HCT116 (cell line): ENCODE measurements at regions of chr15 and their contacts with region 1.

Region 1: DNA sequence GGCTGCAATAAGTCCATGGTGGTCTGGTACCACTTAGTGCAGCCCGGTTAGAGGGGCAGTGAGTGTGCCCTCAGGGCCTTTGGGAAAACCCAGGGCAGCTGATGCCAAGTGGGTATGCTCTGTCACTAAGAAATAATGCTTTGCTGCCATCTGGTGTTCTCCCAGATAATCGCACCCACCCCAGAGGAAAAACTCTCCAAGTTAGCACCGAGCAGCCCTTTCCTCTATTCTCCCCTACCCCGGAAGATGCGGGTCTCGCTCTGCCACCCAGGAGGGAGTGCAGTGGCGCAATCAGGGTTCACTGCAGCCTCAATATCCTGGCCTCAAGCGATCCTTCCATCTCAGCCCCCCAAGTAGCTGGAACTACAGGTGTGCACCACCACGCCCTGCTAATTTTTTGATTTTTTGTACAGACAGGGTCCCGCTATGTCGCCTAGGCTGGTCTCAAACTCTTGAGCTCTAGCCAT is 21.3 kb upstream of the DAPK2 start:
- DNase-seq: no peak
- ATAC-seq: peak; percentile 87
- H3K4me3 ChIP-seq: no peak overlapping the region
- H3K27ac ChIP-seq: no peak overlapping the region
- H3K4me1 ChIP-seq: peaks cover 0 to 18% of the 10 kb centered on the region in 2 experiments; a peak in 1 of 4 replicates
- H3K27me3 ChIP-seq: no peaks in the 10 kb centered on the region
- CTCF ChIP-seq: peak; percentile 67 to 81 (median 73)
- POLR2A ChIP-seq: no peak
- RAD21 ChIP-seq: peak; percentile 90

Region 2: GRCh38 chr15:63288778-63289378 is 778.7 kb before region 1 on chr15:
- CTCF ChIA-PET with region 1: no interaction called
- POLR2A ChIA-PET with region 1: no interaction called
- RAD21 ChIA-PET with region 1: no interaction called
- intact Hi-C with region 1: loop called (anchors 2 kb)
- DNase-seq: peak; percentile 33
- ATAC-seq: peak; percentile 60; the same call in 1 of the 2 replicates
- H3K4me3 ChIP-seq: no peak overlapping the region
- H3K27ac ChIP-seq: no peak overlapping the region
- H3K4me1 ChIP-seq: peaks cover 0 to 7% of the 10 kb centered on the region in 2 experiments; a peak in 2 of 4 replicates
- H3K27me3 ChIP-seq: no peaks in the 10 kb centered on the region
- CTCF ChIP-seq: peak; percentile 51 to 79 (median 73)
- POLR2A ChIP-seq: no peak
- RAD21 ChIP-seq: peak; percentile 85

Region 3: DNA sequence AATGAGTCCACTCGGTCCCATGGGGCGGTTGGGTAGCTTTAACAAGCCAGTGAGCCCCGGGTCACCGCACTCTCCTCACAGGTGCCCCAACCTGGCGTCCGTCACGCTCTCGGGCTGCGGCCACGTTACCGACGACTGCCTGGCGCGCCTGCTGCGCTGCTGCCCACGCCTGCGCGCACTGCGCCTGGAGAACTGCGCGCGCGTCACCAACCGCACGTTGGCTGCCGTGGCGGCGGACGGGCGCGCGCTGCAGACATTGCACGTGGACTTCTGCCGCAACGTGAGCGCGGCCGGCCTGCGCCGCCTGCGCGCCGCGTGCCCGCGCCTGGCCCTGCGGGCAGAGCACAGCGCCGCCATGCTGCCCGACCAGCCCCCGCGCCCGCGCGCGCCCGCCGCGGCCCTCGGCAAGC is 467.0 kb before region 1 on chr15:
- CTCF ChIA-PET with region 1: interaction called, 11 read pairs
- POLR2A ChIA-PET with region 1: no interaction called
- RAD21 ChIA-PET with region 1: no interaction called
- intact Hi-C with region 1: no loop called
- DNase-seq: peak; percentile 79
- ATAC-seq: peak; percentile 82
- H3K4me3 ChIP-seq: peak overlapping the region; percentile 77 to 85
- H3K27ac ChIP-seq: peak overlapping the region; percentile 74
- H3K4me1 ChIP-seq: peaks cover 13 to 31% of the 10 kb centered on the region in 2 experiments; a peak in 3 of 4 replicates
- H3K27me3 ChIP-seq: no peaks in the 10 kb centered on the region
- CTCF ChIP-seq: no peak
- POLR2A ChIP-seq: peak; percentile 83
- RAD21 ChIP-seq: no peak

Region 4: GRCh38 chr15:63752075-63752684 is 315.4 kb before region 1 on chr15:
- CTCF ChIA-PET with region 1: interaction called, 69 read pairs
- POLR2A ChIA-PET with region 1: no interaction called
- RAD21 ChIA-PET with region 1: interaction called in 1 of 2 experiments, 14 read pairs
- intact Hi-C with region 1: loop called (anchors 1 kb)
- DNase-seq: peak; percentile 60
- ATAC-seq: peak; percentile 93
- H3K4me3 ChIP-seq: no peak overlapping the region
- H3K27ac ChIP-seq: no peak overlapping the region
- H3K4me1 ChIP-seq: no peaks in the 10 kb centered on the region
- H3K27me3 ChIP-seq: no peaks in the 10 kb centered on the region
- CTCF ChIP-seq: peak; percentile 66 to 82 (median 72)
- POLR2A ChIP-seq: no peak
- RAD21 ChIP-seq: peak; percentile 87

Region 5: DNA sequence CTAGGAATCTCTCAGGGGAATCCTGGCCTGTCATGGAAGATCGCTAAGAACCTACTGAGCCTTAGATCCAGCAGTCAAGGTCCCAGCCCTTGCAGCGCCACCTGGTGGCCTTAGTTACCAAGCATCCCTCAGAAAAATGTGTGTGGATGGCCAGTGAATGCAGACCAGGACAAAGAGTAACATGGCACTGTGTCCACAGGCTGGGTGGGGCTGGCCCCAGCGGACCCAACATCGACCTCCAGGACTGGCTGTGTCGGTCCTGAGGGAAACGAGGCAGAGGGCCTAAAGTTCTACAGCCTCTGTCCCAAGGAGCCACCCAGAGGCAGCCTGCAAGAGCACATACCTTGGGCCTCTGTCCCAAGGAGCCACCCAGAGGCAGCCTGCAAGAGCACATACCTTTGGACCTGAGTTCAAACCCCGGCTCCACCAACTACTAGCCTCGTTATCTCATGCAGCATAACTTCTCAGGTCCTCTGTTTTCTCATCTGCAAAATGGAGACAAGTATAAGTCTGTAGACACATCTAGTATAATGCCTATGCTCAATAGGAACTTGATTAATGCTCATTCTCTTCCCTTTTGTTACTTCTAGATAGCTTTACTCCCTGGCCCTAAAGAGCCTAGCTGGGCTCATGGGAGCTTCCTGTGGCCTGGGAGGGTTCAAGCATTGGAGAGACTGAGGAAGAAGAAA is 176.4 kb before region 1 on chr15:
- CTCF ChIA-PET with region 1: no interaction called
- POLR2A ChIA-PET with region 1: no interaction called
- RAD21 ChIA-PET with region 1: no interaction called
- intact Hi-C with region 1: loop called (anchors 1 kb)
- DNase-seq: peak; percentile 81
- ATAC-seq: peak; percentile 96
- H3K4me3 ChIP-seq: no peak overlapping the region
- H3K27ac ChIP-seq: no peak overlapping the region
- H3K4me1 ChIP-seq: peaks cover under 1 to 19% of the 10 kb centered on the region in 2 experiments; a peak in 3 of 4 replicates
- H3K27me3 ChIP-seq: no peaks in the 10 kb centered on the region
- CTCF ChIP-seq: peak; percentile 87 to 95 (median 92)
- POLR2A ChIP-seq: no peak
- RAD21 ChIP-seq: peak; percentile 78

Region 6: DNA sequence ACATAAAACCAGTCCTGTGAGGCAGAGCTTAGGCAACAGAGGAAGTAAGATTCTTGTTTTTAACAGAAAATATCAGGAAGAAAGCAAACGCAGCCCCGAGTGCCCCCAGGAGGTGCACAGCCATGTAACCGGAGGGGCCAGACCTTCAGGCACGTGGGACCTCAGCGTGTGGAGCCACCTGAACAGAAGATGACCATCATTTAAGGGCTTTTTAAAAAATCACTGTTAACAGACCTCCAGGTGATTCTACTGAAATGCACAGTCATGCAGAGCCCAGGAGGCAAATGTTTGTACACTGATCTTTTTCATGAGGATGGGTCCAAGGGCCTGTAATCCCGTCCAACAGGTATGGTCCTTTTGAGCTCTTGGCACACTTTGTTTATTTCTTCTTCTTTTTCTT is 883.3 kb after region 1 on chr15:
- CTCF ChIA-PET with region 1: no interaction called
- POLR2A ChIA-PET with region 1: no interaction called
- RAD21 ChIA-PET with region 1: no interaction called
- intact Hi-C with region 1: no loop called
- DNase-seq: no peak
- ATAC-seq: no peak
- H3K4me3 ChIP-seq: no peak overlapping the region
- H3K27ac ChIP-seq: no peak overlapping the region
- H3K4me1 ChIP-seq: no peaks in the 10 kb centered on the region
- H3K27me3 ChIP-seq: no peaks in the 10 kb centered on the region
- CTCF ChIP-seq: no peak
- POLR2A ChIP-seq: no peak
- RAD21 ChIP-seq: no peak